AG04449 (cell line): ENCODE measurements at regions of chr3 and their contacts with region 1.

Region 1: GRCh38 chr3:50192689-50193141 is 1.3 kb downstream of the GNAT1 start:
- DNase-seq: no peak
- H3K4me3 ChIP-seq: no peak overlapping the region
- CTCF ChIP-seq: peak; percentile 84

Region 2: DNA sequence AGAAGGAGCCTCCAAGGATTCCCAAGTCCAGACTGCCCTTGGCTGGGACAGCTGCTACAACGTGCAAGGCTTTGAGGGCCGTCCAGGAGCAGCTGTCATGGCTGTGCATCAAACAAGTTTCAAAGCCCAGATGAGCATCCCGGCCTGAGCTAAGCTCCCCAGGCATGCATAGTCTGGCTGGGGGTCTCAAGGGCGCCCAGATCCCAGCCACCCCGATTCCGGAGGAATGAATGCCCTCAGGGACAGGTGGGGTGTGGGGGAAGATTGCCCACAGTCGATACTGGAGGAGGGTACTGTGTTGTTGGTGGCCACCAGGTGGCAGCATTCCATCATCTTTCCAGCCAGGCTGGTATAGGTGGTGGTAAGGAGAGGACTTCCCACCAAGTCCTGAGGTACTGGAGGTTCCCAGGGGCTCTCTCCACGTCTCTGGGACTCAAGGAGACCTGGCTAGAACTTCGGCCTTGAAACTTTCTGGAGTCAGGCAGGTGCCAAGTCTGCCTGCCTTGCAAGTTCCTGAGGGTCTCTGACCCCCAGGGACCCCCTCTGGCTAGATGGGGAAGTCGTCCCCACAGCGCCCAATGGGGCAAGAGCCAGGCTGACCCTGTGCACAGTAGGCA is 71.2 kb before region 1 on chr3:
- CTCF ChIA-PET with region 1: interaction called, 817 read pairs
- POLR2A ChIA-PET with region 1: interaction called, 5 read pairs
- DNase-seq: peak; percentile 21
- H3K4me3 ChIP-seq: no peak overlapping the region
- CTCF ChIP-seq: peak; percentile 79

Region 3: GRCh38 chr3:50227390-50228183 is 34.9 kb after region 1 on chr3:
- CTCF ChIA-PET with region 1: interaction called, 1,029 read pairs
- POLR2A ChIA-PET with region 1: no interaction called
- DNase-seq: no peak
- H3K4me3 ChIP-seq: peak overlapping the region; percentile 80
- CTCF ChIP-seq: peak; percentile 78

Region 4: DNA sequence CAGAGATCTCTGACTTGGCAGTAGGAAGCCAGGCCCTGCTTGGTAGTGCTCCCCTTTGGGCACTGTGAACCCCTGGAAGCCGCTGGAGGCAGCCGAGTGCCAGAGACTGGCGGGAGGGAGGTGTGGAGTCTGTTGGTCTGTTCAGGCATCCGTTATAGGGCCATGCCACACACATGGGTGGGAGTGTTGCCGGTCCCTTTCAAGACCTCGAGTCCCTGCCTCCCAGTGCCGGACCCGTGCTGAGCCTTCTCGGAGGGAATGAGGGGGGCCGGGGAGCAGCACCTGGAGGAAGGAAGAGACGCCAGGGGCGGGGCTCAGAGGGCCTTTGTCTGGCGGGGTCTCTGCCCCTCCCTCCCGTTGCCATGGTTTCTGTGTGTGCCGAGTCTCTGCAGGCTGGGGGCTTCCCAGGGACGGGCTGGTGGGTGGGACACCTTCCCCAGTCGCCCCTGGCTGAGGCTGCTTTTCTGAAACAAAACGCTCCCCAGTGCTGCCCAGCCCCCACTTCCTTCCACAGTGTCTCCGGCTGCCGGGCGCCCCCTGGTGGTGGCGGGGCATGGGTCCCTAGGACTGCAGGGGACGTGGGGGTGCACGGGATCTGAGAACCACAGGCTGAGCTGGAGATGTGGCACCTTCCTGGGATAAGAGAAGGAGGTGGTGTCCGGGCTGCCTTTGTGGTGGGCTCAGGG is 53.3 kb after region 1 on chr3:
- CTCF ChIA-PET with region 1: interaction called, 125 read pairs
- POLR2A ChIA-PET with region 1: no interaction called
- DNase-seq: peak; percentile 34
- H3K4me3 ChIP-seq: peak overlapping the region; percentile 51
- CTCF ChIP-seq: peak; percentile 99

Region 5: DNA sequence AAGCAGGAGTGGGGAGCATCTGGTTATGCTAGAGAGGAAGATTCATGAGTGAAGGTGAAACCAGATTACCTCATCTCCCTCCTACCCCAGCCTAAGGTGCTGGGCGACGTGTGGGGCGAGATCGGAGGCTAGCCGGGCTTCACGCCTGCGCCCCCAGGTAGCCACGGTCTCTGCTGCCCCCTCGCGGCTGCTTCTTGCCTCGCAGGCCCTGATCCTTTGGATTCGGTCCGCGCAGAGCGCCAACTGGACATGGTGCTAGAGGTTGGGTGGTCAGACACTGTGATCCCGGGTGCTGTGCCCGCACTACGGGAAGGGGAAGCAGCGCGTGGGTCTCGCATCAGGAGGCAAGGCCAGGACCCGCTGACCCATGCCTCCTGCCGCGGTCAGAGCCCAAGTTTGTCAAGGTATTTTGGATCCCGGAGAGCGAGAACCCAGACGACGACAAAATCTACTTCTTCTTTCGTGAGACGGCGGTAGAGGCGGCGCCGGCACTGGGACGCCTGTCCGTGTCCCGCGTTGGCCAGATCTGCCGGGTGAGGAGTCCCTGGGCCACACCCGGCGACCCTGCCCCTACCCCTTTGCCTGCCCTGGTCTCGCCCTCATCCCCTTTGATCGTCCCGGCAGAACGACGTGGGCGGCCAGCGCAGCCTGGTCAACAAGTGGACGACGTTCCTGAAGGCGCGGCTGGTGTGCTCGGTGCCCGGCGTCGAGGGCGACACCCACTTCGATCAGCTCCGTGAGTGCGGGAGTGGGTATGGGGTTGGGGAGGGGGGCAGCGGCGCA is 80.4 kb after region 1 on chr3:
- CTCF ChIA-PET with region 1: interaction called, 303 read pairs
- POLR2A ChIA-PET with region 1: no interaction called
- DNase-seq: no peak
- H3K4me3 ChIP-seq: peak overlapping the region; percentile 52
- CTCF ChIP-seq: peak; percentile 98

Region 6: GRCh38 chr3:50321336-50322114 is 128.8 kb after region 1 on chr3:
- CTCF ChIA-PET with region 1: interaction called, 32 read pairs
- POLR2A ChIA-PET with region 1: no interaction called
- DNase-seq: no peak
- H3K4me3 ChIP-seq: peak overlapping the region; percentile 73
- CTCF ChIP-seq: peak; percentile 60